ENCODE measurements at regions of chr7 and their contacts with region 1.

Region 1: DNA sequence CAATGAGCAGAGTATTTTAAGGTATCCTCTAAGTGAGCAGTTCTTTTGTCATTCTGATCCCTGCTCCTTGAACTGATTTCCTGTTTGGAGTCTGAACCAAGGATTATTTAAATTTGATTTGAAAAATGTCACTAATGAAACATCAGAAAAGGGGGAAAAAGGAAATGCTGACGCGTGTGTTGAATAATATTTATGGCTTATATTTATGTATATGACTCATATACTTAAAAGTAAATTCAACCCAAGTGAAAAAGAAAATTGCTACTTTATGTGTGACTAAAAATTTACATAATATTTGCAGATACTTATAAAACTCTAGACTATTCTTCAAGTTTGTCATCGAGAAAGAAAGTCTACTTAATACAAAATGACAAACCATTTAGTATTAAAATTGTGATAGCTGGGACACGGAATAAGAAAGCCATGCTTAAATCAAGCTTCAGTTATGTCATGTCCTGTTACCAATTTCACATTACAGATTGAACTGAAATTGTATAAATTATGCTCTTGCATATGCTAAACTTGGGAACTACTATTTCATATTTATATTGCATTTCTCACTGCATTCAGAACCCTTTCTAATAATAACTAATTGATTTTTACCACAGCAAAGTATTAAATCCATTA is 649.9 kb downstream of the MAGI2 start:
- DNase-seq: no peak
- H3K4me3 ChIP-seq: no peak overlapping the region
- H3K27ac ChIP-seq: no peak overlapping the region
- H3K4me1 ChIP-seq: no peaks in the 10 kb centered on the region
- H3K27me3 ChIP-seq: no peaks in the 10 kb centered on the region
- CTCF ChIP-seq: no peak

Region 2: DNA sequence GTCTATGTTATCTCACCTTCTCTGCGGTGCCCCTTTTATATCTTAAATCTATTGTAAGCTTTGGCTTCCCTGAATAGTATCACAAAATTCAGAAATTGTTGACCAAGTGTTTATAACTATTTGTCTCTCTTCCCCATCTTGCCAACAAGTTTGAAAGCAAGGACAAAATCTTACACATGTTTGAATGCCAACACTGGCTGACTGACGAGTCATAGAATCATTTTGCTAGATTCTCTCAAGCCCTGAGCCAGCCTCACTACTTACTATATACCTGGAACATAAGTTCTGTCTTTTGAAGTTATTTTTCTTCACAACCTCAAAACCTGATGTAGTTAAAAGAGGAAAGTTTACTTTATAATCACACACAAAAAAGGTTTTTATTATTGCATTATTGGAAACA is 304.3 kb before region 1 on chr7:
- CTCF ChIA-PET with region 1: no interaction called
- dilution Hi-C with region 1: no loop called
- in situ Hi-C with region 1: no loop called
- intact Hi-C with region 1: no loop called
- DNase-seq: no peak
- H3K4me3 ChIP-seq: no peak overlapping the region
- H3K27ac ChIP-seq: no peak overlapping the region
- H3K4me1 ChIP-seq: no peaks in the 10 kb centered on the region
- H3K27me3 ChIP-seq: no peaks in the 10 kb centered on the region
- CTCF ChIP-seq: no peak

Region 3: GRCh38 chr7:78720066-78720465 is 83.5 kb before region 1 on chr7:
- CTCF ChIA-PET with region 1: no interaction called
- dilution Hi-C with region 1: no loop called
- in situ Hi-C with region 1: no loop called
- intact Hi-C with region 1: no loop called
- DNase-seq: no peak
- H3K4me3 ChIP-seq: no peak overlapping the region
- H3K27ac ChIP-seq: no peak overlapping the region
- H3K4me1 ChIP-seq: no peaks in the 10 kb centered on the region
- H3K27me3 ChIP-seq: no peaks in the 10 kb centered on the region
- CTCF ChIP-seq: no peak

Region 4: DNA sequence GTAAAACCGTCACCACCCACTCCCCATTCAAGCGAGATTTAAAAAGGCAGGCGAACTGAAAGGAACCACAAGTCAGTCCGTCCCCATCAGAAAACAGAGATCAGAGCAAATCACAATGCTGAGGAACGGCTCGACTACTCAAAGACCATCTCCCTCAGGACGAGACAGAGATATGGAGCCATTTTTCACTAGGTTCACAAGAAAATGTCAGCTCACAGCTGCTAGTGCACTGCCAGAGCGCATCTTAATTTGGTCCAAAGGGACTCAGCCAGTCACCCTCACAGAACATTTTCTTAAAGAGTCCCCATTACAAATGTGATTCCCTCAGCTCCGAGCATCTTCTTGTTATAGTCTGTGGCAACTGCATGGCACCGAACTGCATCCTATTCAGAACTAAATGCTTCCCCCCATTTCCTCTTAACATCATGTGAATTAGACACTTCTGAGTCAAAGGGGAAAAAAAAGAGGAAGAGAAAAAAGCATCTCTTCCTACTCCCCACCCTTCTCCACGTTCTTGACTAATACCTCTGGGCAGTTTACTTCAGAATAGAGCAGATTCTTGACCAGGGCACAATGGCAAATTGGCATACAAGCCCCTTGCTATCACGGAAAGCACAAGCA is 34.0 kb before region 1 on chr7:
- CTCF ChIA-PET with region 1: no interaction called
- dilution Hi-C with region 1: loop called (anchors 5 kb)
- in situ Hi-C with region 1: no loop called
- intact Hi-C with region 1: no loop called
- DNase-seq: no peak
- H3K4me3 ChIP-seq: peak overlapping the region in 2 of 3 experiments; percentile 12 to 23
- H3K27ac ChIP-seq: no peak overlapping the region
- H3K4me1 ChIP-seq: no peaks in the 10 kb centered on the region
- H3K27me3 ChIP-seq: peaks cover 5% of the 10 kb centered on the region
- CTCF ChIP-seq: no peak